Activated CD4-positive, alpha-beta T cell treated with anti-CD3 and anti-CD28 coated beads, Interleukin-2, amount 10 ng/mL, durations not matched to agents 7 days and 5 days (primary cell): ENCODE measurements at regions of chr15 and their contacts with region 1.

Region 1: DNA sequence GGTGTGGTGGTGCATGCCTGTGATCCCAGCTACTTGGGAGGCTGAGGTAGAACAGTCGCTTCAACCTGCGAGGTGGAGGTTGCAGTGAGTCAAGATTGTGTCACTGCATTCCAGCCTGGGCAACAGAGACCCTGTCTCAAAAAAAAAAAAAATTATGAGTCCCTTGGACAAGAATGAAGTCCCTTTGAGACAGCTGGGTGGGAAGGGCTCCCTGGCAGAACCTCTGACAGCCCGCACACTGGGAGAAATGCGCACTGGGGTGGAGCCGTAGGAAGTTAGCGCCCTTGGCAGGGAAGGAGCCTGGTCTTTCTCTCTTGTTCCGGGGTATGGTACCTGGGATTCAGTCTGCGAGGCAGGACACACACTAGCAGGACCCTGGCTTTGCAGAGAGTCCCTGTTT is 51.4 kb downstream of the SLC30A4 start:
- DNase-seq: no peak
- H3K4me3 Mint-ChIP-seq: no peak overlapping the region
- H3K27ac Mint-ChIP-seq: no peak overlapping the region
- H3K4me1 Mint-ChIP-seq: no peaks in the 10 kb centered on the region
- H3K27me3 Mint-ChIP-seq: peaks cover 20% of the 10 kb centered on the region

Region 2: DNA sequence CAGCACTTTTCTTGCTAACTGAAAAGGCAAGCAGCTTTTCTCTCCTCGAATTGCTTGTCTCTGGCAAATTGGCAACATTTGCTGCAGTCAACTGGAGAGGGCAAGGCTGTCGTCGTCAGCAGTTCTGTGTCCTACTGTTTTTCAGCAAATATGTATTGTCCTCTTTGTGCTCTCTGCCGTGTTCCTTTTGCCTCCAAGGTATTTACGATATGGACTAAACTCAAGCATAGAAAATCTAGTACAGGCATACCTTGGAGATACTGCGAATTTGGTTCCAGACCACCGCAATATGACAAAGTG is 52.0 kb after region 1 on chr15:
- CTCF ChIA-PET with region 1: no interaction called
- POLR2A ChIA-PET with region 1: interaction called, 13 read pairs
- DNase-seq: no peak
- H3K4me3 Mint-ChIP-seq: peak overlapping the region; percentile 81
- H3K27ac Mint-ChIP-seq: peak overlapping the region; percentile 80
- H3K4me1 Mint-ChIP-seq: peaks cover 22% of the 10 kb centered on the region
- H3K27me3 Mint-ChIP-seq: peaks cover 26% of the 10 kb centered on the region